PC-9 (cell line): ENCODE measurements at regions of chr9 and their contacts with region 1.

Region 1: DNA sequence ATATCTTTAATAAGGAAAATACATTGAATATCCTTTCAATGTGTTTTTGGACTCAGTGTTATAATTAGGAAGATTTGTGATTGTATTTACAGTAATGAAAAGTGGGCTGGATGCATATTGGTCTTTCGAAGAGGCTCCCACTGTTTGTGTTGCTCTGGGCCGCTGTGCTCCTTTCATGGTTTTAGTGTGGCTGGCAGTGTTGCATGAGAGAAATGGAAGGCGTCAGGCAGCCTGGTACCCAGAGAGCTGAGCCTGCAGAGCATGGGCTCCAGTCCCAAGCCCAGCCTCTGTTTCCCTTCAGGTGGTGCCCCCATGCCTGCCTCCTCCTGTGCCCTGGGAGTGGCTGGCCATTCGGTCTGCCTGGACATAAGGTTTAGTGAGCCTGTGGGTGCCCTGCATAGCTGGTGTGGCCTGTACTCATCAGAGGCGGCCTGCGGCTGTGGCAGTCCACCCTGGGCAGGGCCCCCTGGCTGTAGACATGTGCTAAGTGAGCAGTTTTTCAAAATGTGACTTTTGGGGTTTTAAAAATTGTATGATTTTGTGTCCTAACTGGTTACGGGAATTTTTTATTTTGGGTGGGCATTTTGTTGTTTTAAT is 27.4 kb upstream of the FAM120AOS start:
- DNase-seq: no peak
- H3K4me3 ChIP-seq: no peak overlapping the region
- H3K27ac ChIP-seq: no peak overlapping the region
- H3K4me1 ChIP-seq: peaks cover 3% of the 10 kb centered on the region; the same call in 1 of the 2 replicates
- H3K27me3 ChIP-seq: no peaks in the 10 kb centered on the region
- CTCF ChIP-seq: no peak

Region 2: GRCh38 chr9:93172666-93173364 is 308.0 kb before region 1 on chr9:
- CTCF ChIA-PET with region 1: interaction called, 10 read pairs
- POLR2A ChIA-PET with region 1: no interaction called
- intact Hi-C with region 1: no loop called
- DNase-seq: no peak
- H3K4me3 ChIP-seq: no peak overlapping the region
- H3K27ac ChIP-seq: no peak overlapping the region
- H3K4me1 ChIP-seq: no peaks in the 10 kb centered on the region
- H3K27me3 ChIP-seq: no peaks in the 10 kb centered on the region
- CTCF ChIP-seq: no peak